Activated CD4-positive, alpha-beta T cell treated with anti-CD3 and anti-CD28 coated beads, Interleukin-2, amount 10 ng/mL, durations not matched to agents 24 days and 14 days (primary cell): ENCODE measurements at regions of chr7 and their contacts with region 1.

Region 1: GRCh38 chr7:132437730-132438129 is 138.5 kb downstream of the PLXNA4 start:
- DNase-seq: peak; percentile 92
- H3K4me3 Mint-ChIP-seq: peak overlapping the region; percentile 49
- H3K27ac Mint-ChIP-seq: peak overlapping the region; percentile 79
- H3K4me1 Mint-ChIP-seq: peaks cover 88% of the 10 kb centered on the region
- H3K27me3 Mint-ChIP-seq: no peaks in the 10 kb centered on the region

Region 2: GRCh38 chr7:132019703-132020102 is 418.0 kb before region 1 on chr7:
- intact Hi-C with region 1: no loop called
- DNase-seq: no peak
- H3K4me3 Mint-ChIP-seq: no peak overlapping the region
- H3K27ac Mint-ChIP-seq: no peak overlapping the region
- H3K4me1 Mint-ChIP-seq: no peaks in the 10 kb centered on the region
- H3K27me3 Mint-ChIP-seq: no peaks in the 10 kb centered on the region

Region 3: GRCh38 chr7:132450188-132450587 is 12.5 kb after region 1 on chr7:
- intact Hi-C with region 1: loop called (anchors 1 kb)
- DNase-seq: peak; percentile 67
- H3K4me3 Mint-ChIP-seq: peak overlapping the region; percentile 53
- H3K27ac Mint-ChIP-seq: peak overlapping the region; percentile 86
- H3K4me1 Mint-ChIP-seq: peaks cover 82% of the 10 kb centered on the region
- H3K27me3 Mint-ChIP-seq: no peaks in the 10 kb centered on the region

Region 4: GRCh38 chr7:132464746-132465145 is 27.0 kb after region 1 on chr7:
- intact Hi-C with region 1: loop called (anchors 1 kb)
- DNase-seq: no peak
- H3K4me3 Mint-ChIP-seq: no peak overlapping the region
- H3K27ac Mint-ChIP-seq: no peak overlapping the region
- H3K4me1 Mint-ChIP-seq: peaks cover 45% of the 10 kb centered on the region
- H3K27me3 Mint-ChIP-seq: peaks cover 6% of the 10 kb centered on the region

Region 5: DNA sequence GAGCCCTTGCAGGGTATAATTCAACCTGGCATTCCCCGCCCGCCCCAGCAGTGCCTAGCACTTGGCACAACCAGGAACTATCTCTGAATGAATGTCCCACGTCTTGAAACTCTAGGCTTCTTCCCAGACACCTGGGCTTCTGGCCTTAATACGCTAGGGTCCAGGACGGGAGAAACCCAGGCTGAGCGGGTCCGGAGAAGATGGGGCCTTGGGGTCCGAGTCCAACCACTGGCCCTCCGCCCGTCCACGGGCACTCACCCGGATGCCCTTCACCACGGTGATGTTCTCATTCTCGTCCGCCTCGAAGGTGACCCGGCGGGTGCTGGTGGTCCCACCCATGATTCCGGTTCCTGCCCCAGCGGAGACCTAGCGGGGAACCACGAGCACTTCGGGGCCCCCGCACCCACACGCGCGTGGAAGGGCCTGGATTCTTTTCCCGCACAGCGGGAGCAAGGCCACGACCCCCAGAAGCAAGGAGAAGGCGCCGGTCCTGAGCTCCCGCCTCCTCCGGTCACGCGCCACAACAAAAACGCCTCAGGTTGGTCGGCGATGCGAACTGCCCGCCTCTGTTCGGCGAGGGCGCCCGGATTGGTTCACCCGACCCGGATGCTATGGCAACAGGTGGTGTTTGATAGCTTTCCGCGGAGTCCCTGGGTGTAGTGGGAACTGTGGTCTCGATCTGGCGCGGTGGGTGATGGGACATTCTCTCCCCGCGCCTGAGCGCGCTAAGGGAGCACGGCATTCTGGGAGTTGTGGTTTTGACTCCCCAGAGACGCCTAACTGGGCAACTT is 644.1 kb after region 1 on chr7 and contains the start of gene CHCHD3:
- intact Hi-C with region 1: loop called (anchors 5 kb)
- DNase-seq: peak; percentile 99
- H3K4me3 Mint-ChIP-seq: peak within 1 kb of the TSS; percentile 95
- H3K27ac Mint-ChIP-seq: peak within 1 kb of the TSS; percentile 87
- H3K4me1 Mint-ChIP-seq: peaks cover 18% of the 10 kb centered on the region
- H3K27me3 Mint-ChIP-seq: peaks cover 3% of the 10 kb centered on the region
- total RNA-seq, gene CHCHD3: 74.5 and 76.2 TPM in 2 replicates